B cell (primary cell): ENCODE measurements at regions of chrX and their contacts with region 1.

Region 1: DNA sequence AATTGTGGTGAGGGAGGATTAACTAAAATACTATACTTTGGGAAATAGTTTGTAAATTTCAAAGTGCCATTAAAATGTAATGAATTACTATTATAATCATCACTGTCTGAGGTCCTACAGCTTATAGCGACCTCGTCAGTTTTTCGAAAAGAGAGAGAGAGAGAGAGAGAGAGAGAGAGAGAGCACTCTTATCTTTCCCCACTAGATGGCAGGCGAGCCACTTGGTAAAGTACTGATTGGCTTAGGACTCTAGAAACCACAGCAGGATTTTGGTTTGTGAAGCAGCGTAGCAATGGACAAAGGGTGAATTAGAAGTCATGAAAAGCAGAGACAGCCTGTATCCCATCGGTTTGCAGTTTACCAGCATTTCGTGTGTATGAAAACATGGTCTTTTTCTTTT is 52.5 kb downstream of the LINC00632 start:
- DNase-seq: peak; percentile 30
- ATAC-seq: no peak
- H3K4me3 ChIP-seq: no peak overlapping the region
- H3K4me3 Mint-ChIP-seq: no peak overlapping the region
- H3K27ac ChIP-seq: no peak overlapping the region
- H3K27ac Mint-ChIP-seq: no peak overlapping the region
- H3K4me1 ChIP-seq: peaks cover 3 to 9% of the 10 kb centered on the region in 2 donors
- H3K4me1 Mint-ChIP-seq: peaks cover 6% of the 10 kb centered on the region
- H3K27me3 ChIP-seq: peaks cover 0 to 9% (median 4%) of the 10 kb centered on the region in 4 experiments
- H3K27me3 Mint-ChIP-seq: peaks cover 17% of the 10 kb centered on the region
- CTCF ChIP-seq: peak; percentile 57

Region 2: GRCh38 chrX:140500441-140500840 is 261.6 kb before region 1 on chrX:
- CTCF ChIA-PET with region 1: no interaction called
- POLR2A ChIA-PET with region 1: no interaction called
- intact Hi-C with region 1: no loop called
- DNase-seq: no peak
- ATAC-seq: no peak
- H3K4me3 ChIP-seq: no peak overlapping the region
- H3K4me3 Mint-ChIP-seq: no peak overlapping the region
- H3K27ac ChIP-seq: no peak overlapping the region
- H3K27ac Mint-ChIP-seq: no peak overlapping the region
- H3K4me1 ChIP-seq: peaks cover 0 to 2% of the 10 kb centered on the region in 2 donors
- H3K4me1 Mint-ChIP-seq: peaks cover 6% of the 10 kb centered on the region
- H3K27me3 ChIP-seq: peaks cover 0 to 17% (median 4%) of the 10 kb centered on the region in 4 experiments
- H3K27me3 Mint-ChIP-seq: peaks cover 20% of the 10 kb centered on the region
- CTCF ChIP-seq: no peak

Region 3: GRCh38 chrX:140510895-140511295 is 251.2 kb before region 1 on chrX:
- CTCF ChIA-PET with region 1: no interaction called
- POLR2A ChIA-PET with region 1: no interaction called
- intact Hi-C with region 1: no loop called
- DNase-seq: no peak
- ATAC-seq: no peak
- H3K4me3 ChIP-seq: no peak overlapping the region
- H3K4me3 Mint-ChIP-seq: no peak overlapping the region
- H3K27ac ChIP-seq: no peak overlapping the region
- H3K27ac Mint-ChIP-seq: no peak overlapping the region
- H3K4me1 ChIP-seq: no peaks in the 10 kb centered on the region
- H3K4me1 Mint-ChIP-seq: no peaks in the 10 kb centered on the region
- H3K27me3 ChIP-seq: peaks cover 0 to 27% (median 3%) of the 10 kb centered on the region in 4 experiments
- H3K27me3 Mint-ChIP-seq: peaks cover 26% of the 10 kb centered on the region
- CTCF ChIP-seq: no peak

Region 4: GRCh38 chrX:141278302-141278701 is 516.2 kb after region 1 on chrX:
- CTCF ChIA-PET with region 1: interaction called, 4 read pairs
- POLR2A ChIA-PET with region 1: no interaction called
- intact Hi-C with region 1: loop called (anchors 10 kb)
- DNase-seq: peak; percentile 21
- ATAC-seq: no peak
- H3K4me3 ChIP-seq: no peak overlapping the region
- H3K4me3 Mint-ChIP-seq: no peak overlapping the region
- H3K27ac ChIP-seq: no peak overlapping the region
- H3K27ac Mint-ChIP-seq: no peak overlapping the region
- H3K4me1 ChIP-seq: no peaks in the 10 kb centered on the region
- H3K4me1 Mint-ChIP-seq: no peaks in the 10 kb centered on the region
- H3K27me3 ChIP-seq: no peaks in the 10 kb centered on the region
- H3K27me3 Mint-ChIP-seq: no peaks in the 10 kb centered on the region
- CTCF ChIP-seq: peak; percentile 25